Activated CD8-positive, alpha-beta T cell treated with anti-CD3 and anti-CD28 coated beads, Interleukin-2, amount 10 ng/mL, durations not matched to agents 7 days and 5 days (primary cell): ENCODE measurements at regions of chr20 and their contacts with region 1.

Region 1: GRCh38 chr20:1108437-1108920 is 9.9 kb upstream of the PSMF1 start:
- DNase-seq: peak; percentile 64
- ATAC-seq: peak; percentile 77
- H3K4me3 Mint-ChIP-seq: no peak overlapping the region
- H3K27ac Mint-ChIP-seq: no peak overlapping the region
- H3K4me1 Mint-ChIP-seq: no peaks in the 10 kb centered on the region
- H3K27me3 Mint-ChIP-seq: no peaks in the 10 kb centered on the region

Region 2: GRCh38 chr20:1122388-1123315 is 14.2 kb after region 1 on chr20:
- CTCF ChIA-PET with region 1: interaction called, 13 read pairs
- POLR2A ChIA-PET with region 1: no interaction called
- DNase-seq: peak; percentile 33
- ATAC-seq: no peak
- H3K4me3 Mint-ChIP-seq: peak overlapping the region; percentile 19
- H3K27ac Mint-ChIP-seq: peak overlapping the region; percentile 75
- H3K4me1 Mint-ChIP-seq: peaks cover 58% of the 10 kb centered on the region
- H3K27me3 Mint-ChIP-seq: no peaks in the 10 kb centered on the region